ENCODE measurements at regions of chr12 and their contacts with region 1.

Region 1: GRCh38 chr12:25195056-25195971 is at the starts of genes DNAI7 and ETFRF1:
- DNase-seq: peak; percentile 92
- H3K4me3 Mint-ChIP-seq: peak within 1 kb of the TSS; percentile 94
- H3K27ac Mint-ChIP-seq: peak within 1 kb of the TSS; percentile 94
- H3K4me1 Mint-ChIP-seq: peaks cover 22% of the 10 kb centered on the region
- H3K27me3 Mint-ChIP-seq: peaks cover 3% of the 10 kb centered on the region
- total RNA-seq, gene DNAI7: not detected in 2 replicates
- total RNA-seq, gene ETFRF1: 7.6 and 9.8 TPM in 2 replicates

Region 2: GRCh38 chr12:25250744-25251730 is 55.7 kb after region 1 on chr12 and contains the start of gene KRAS:
- intact Hi-C with region 1: loop called (anchors 2 kb)
- DNase-seq: peak; percentile 88
- H3K4me3 Mint-ChIP-seq: peak within 1 kb of the TSS; percentile 90
- H3K27ac Mint-ChIP-seq: peak within 1 kb of the TSS; percentile 93
- H3K4me1 Mint-ChIP-seq: peaks cover 22% of the 10 kb centered on the region
- H3K27me3 Mint-ChIP-seq: peaks cover 16% of the 10 kb centered on the region
- total RNA-seq, gene KRAS: 25.2 TPM in 2 replicates

Region 3: DNA sequence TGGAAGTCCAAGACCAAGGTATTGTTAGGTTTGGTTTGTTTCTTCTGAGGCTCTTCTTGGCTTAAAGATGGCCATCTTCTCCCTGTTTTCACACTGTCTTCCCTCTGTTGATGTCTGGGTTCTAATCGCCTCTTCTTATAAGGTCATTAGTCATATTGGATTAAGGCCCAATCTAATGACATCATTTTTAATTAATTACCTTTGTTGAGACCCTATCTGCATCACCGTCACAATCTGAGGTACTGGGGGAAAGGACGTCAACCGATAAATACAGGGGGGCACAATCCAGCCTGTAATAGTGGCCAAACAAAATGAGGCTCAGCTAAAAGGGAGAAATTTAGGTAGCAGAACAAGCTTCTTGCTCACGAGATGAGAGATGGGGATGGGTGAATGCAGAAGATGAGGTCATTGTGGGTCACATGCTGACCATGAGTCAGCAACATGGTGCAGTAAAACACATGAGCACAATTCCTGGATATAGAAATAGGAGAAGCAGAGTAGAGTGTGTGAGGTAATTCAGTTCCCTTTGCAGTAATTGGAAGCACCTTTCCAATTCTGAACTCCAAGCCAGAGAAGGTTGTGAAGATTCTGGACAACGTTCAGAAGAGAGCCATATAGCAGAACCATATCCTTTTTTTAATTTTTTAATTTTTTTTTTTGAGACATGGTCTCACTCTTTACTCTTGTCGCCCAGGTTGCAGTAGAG is 419.7 kb after region 1 on chr12:
- intact Hi-C with region 1: no loop called
- DNase-seq: no peak
- H3K4me3 Mint-ChIP-seq: no peak overlapping the region
- H3K27ac Mint-ChIP-seq: no peak overlapping the region
- H3K4me1 Mint-ChIP-seq: no peaks in the 10 kb centered on the region
- H3K27me3 Mint-ChIP-seq: peaks cover 8% of the 10 kb centered on the region